ENCODE measurements at regions of chr12 and their contacts with region 1.

Region 1: GRCh38 chr12:19739183-19739776 is 300.0 kb downstream of the AEBP2 start:
- DNase-seq: peak; percentile 72

Region 2: DNA sequence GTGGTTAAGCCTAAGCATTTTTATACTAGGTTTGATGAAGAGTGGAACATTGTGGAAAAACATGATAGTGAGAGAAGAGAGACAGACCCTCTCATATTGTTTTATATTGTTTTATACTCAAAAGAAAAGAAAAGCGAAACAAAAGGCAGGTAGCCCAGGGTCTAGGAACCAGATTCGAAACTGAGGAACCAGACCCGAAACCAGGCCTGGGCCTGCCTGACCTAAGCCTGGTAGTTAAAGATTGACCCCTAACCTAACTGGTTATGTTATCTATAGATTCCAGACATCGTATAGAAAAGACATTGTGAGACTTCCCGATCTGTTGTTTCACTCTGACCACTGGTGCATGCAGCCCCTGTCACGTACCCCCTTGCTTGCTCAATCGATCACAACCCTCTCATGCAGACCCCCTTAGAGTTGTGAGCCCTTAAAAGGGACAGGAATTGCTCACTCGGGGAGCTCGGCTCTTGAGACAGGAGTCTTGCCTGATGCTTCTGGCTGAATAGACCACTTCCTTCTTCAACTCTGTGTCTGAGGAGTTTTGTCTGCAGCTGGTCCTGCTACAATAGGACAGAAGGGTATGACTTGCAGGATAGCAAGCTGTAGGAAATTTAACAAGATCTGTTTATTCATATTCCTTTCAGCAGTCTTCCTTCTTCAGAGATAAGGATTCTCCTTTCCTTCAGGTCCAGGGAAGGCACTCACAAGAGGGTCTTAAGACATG is 756.9 kb before region 1 on chr12:
- in situ Hi-C with region 1: no loop called
- DNase-seq: no peak

Region 3: GRCh38 chr12:19528750-19529149 is 210.5 kb before region 1 on chr12:
- in situ Hi-C with region 1: no loop called
- DNase-seq: no peak

Region 4: DNA sequence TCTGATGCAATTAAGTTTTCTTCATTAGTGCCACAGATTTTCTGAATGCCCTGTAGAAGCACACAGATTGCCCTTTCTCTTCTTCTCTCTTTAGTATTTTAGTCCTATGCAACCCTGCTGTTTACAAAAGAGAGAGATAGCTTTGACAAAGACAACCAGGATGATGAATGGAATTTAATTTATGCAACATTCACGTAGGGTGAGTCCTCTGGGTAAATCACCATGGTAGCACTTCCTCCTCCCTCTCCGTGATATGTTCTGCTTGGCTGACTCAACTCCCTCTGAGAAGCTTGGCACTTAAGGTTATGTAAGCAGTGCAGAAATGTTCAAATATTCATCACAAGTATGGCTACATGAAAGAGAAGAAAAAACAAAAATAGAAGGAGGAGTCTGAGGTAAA is 228.2 kb after region 1 on chr12:
- in situ Hi-C with region 1: no loop called
- DNase-seq: peak; percentile 71

Region 5: GRCh38 chr12:20376984-20377383 is 637.7 kb after region 1 on chr12:
- in situ Hi-C with region 1: loop called (anchors 25 kb)
- DNase-seq: peak; percentile 49